Lower leg skin (tissue), 4 donors: ENCODE measurements at regions of chr12 and their contacts with region 1.

Region 1: GRCh38 chr12:96687719-96688118 is 198.3 kb downstream of the CFAP54 start:
- DNase-seq: no peak
- H3K4me3 ChIP-seq: no peak overlapping the region
- CTCF ChIP-seq: no peak
- POLR2A ChIP-seq: no peak

Region 2: DNA sequence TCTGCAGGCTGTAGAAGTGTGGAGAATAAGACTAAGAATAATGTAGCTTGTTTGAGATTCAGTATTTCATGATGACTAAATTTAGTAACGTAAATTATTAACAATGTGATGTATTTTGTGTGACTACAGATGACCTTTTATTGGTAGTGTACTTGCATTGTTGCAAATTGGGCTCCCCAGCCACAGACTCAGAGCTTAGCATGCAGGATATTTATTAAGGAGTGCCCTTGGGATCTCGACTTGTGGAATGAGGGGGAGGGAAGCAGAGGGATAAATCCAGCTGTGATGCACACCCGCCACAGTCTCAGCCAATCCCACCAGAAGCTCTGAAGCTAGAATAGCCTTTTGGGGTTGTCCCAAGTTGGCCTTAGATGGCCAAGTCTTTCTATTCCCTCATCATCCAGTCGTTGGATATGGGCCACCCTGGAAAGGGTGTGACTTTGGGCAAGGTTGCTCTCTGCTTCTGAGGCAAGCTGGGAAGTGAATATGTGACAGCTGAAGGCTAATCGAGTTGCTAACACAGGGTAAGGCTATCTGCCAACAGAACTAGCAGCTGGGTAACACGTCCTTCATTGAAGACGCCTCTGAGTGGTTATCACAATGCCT is 1094.3 kb before region 1 on chr12:
- intact Hi-C with region 1: loop called (anchors 5 kb)
- DNase-seq: no peak
- H3K4me3 ChIP-seq: no peak overlapping the region
- CTCF ChIP-seq: no peak
- POLR2A ChIP-seq: no peak